ENCODE measurements at regions of chr20 and their contacts with region 1.

Region 1: DNA sequence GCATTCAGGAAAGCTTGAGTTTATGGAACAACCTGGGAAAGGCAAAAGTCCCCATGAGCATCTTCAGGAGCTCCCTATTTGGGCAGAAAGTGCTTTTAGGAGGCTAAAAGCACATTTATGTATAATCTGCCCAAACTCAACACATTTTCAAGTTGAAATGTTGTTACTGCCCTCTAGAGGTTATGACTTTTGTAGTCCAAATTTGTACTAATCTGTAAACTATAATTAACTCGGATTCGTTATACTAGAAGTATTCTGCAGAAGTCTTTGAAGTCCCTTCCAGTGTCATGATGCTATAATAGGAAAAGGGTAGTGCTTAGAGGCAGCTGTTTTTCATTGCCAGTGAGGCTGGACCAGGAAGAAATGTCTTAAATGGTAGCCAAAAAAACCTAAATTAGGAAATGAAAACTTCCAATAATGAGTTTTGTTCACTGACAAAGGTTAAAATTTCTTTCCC is 44.8 kb upstream of the EMILIN3 start:
- DNase-seq: no peak
- ATAC-seq: peak; percentile 68

Region 2: DNA sequence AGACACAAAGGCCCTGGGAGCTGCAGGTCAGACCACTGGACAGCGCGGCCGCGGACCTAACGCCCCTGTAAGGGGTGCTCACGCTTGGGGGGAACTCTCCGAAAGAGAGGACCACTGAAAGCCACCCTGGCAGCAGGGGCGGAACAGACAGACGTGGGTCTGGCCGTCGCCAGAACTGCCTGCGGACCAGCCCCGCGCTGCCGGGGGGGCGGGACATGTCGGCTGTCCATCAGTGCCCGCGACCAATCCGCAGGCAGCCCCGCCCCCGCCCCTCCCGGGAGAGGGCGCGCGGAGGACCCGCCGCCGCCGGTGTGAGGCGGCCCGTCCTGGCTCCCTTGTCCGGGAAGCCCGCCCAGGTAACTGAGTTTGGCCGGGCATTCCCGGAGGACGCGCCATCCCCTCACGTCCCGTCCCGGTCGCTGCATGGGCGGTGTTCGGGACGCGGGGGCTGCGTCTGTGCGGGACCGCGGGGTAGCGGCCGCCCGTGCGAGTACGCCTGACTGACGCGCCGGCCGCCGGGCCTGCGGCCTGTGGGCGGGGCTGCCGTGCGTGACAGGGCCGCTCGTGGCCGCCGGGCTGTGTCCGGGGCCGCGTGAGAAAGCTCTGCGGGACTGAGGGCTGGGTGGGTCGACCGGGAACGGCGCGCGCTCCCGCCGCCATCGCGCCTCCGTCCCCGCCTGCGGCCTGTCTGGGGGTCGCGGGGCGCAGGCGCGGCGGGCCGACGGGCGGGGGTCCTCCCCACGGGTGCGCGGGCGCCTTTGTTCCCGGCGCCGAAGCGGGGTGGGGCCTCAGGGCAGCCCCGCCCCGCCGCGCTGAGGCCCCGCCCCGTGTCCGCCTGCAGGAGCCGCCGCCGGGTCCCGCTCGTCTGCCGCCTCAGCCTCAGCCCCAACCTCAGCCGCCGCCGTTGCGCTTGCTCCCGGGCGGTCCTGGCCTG is 274.5 kb before region 1 on chr20 and contains the start of gene PLCG1:
- intact Hi-C with region 1: loop called (anchors 10 kb)
- DNase-seq: peak; percentile 94
- ATAC-seq: peak; percentile 92
- total RNA-seq, gene PLCG1: 43.4 TPM

Region 3: DNA sequence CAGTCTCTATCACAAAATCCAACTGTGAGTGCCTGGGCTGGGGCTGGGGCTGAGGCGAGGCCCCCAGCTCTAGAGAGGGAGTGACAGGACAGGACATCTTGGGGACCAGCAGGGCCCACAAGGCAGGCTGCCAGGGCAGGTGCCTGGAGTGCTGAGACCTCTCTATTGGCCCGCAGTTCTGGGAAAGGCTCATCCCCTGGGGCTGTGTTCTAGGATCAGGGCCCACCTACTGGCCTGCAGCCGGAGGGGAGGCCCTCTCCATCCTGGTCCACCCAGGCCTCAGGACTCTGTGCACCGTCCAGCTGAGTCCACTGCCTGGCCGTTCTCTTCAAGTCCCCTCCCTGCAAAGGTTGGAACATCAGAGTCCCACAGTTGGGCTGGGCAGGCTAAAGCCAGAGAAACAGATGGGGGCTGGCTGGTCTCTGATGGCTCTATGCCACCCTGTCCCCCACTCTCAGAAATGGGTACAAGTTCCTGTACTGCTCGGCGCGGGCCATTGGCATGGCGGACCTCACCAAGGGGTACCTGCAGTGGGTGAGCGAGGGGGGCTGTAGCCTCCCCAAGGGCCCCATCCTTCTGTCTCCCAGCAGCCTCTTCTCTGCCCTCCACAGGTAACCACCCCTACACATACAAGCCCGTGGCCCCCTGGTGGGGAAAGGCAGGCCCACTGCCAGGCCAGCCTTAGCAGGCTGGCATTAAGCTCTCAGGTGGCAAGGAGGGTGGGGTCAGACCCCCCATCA is 53.8 kb before region 1 on chr20:
- intact Hi-C with region 1: loop called (anchors 5 kb)
- DNase-seq: no peak
- ATAC-seq: peak; percentile 21

Measured in Right ventricle myocardium inferior (tissue), 1 donor.